Activated B cell treated with CpG ODN at 0.5 μM for 24 hours (primary cell): ENCODE measurements at regions of chr6 and their contacts with region 1.

Region 1: DNA sequence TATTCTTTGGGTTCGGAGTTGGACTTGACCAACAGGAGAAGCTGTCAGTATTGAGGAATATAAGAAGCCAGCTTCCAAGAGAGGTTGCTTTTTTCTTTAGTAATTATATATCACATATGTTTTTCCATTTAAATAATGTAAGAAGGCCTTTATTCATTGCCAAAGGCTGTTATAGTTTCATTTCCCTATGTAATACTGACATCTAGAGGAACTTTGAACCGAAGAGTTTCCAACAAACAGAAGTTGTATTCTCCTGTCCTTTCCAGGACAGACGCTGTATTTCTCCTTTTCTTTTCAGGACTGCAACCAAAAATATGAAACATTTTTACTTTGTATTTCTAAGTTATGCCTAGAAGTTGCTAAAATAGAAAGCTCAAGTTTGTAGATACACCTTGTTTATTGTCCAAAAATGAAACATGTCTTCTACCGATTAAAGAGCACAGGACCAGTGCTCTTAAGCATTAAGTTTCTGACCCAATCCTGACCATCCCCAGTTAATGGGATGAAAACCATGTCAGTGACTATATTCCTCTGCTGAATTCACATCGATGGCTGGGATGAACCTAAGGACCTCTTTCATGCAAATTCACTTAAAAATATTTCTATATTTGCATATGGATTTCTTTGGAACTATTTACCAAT is 55.1 kb downstream of the MYLK4 start:
- DNase-seq: no peak
- ATAC-seq: no peak
- H3K4me3 Mint-ChIP-seq: no peak overlapping the region
- H3K27ac Mint-ChIP-seq: no peak overlapping the region
- H3K4me1 Mint-ChIP-seq: no peaks in the 10 kb centered on the region
- H3K27me3 Mint-ChIP-seq: peaks cover 6% of the 10 kb centered on the region
- CTCF ChIP-seq: peak; percentile 28

Region 2: DNA sequence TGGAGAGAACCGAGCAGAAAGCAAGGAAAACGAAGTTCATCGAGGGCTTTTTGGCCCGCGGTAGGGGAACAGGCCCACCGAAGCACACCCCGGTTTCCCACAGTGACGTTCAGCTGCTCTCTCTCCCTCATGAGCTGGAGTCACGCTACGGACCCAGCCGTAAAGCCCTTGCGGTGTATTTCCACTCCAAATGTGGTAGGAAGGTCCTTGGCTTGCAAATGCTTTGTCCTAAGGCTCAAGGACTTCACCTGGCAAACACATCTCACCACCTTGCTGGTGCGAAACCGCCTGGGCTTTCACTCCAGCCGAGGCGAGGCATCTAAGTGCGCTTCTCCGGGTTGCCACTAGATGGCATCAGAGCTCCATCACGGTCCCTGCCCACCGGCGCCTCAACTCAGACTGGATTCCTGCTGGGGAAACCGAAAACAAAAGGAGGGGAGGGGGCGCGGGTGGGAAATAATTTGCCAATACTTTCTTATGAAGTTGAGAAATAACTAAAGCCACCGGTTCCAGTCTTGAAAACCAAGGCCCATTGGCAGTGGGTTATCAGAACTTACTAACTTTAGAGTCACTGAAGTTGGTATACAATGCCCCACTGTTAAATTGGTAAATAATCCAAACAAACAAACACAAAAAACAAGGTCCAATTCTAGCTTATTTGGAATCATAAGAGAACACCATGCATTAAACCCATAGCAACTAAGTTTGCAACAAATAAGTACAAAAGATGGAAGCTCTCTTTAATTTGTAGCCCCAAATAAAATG is 1099.3 kb before region 1 on chr6:
- CTCF ChIA-PET with region 1: interaction called, 4 read pairs
- POLR2A ChIA-PET with region 1: no interaction called
- intact Hi-C with region 1: loop called (anchors 2 kb)
- DNase-seq: peak; percentile 50
- ATAC-seq: peak; percentile 87
- H3K4me3 Mint-ChIP-seq: no peak overlapping the region
- H3K27ac Mint-ChIP-seq: no peak overlapping the region
- H3K4me1 Mint-ChIP-seq: peaks cover 4% of the 10 kb centered on the region
- H3K27me3 Mint-ChIP-seq: peaks cover 49% of the 10 kb centered on the region
- CTCF ChIP-seq: no peak

Region 3: GRCh38 chr6:2209226-2209809 is 486.3 kb before region 1 on chr6:
- CTCF ChIA-PET with region 1: interaction called, 5 read pairs
- POLR2A ChIA-PET with region 1: no interaction called
- intact Hi-C with region 1: loop called (anchors 5 kb)
- DNase-seq: no peak
- ATAC-seq: peak; percentile 67
- H3K4me3 Mint-ChIP-seq: no peak overlapping the region
- H3K27ac Mint-ChIP-seq: no peak overlapping the region
- H3K4me1 Mint-ChIP-seq: no peaks in the 10 kb centered on the region
- H3K27me3 Mint-ChIP-seq: no peaks in the 10 kb centered on the region
- CTCF ChIP-seq: no peak